PC-9 (cell line): ENCODE measurements at regions of chr6 and their contacts with region 1.

Region 1: GRCh38 chr6:11232193-11232769 is at the start of gene NEDD9:
- DNase-seq: peak; percentile 90 to 96
- H3K4me3 ChIP-seq: peak within 1 kb of the TSS; percentile 81
- H3K27ac ChIP-seq: peak within 1 kb of the TSS; percentile 81
- H3K4me1 ChIP-seq: peaks cover 31% of the 10 kb centered on the region
- H3K27me3 ChIP-seq: no peaks in the 10 kb centered on the region
- CTCF ChIP-seq: no peak
- total RNA-seq, gene NEDD9: 35.8 and 57.5 TPM in 2 replicates

Region 2: GRCh38 chr6:11093589-11094410 is 138.5 kb before region 1 on chr6 and contains the start of gene SMIM13:
- CTCF ChIA-PET with region 1: no interaction called
- POLR2A ChIA-PET with region 1: interaction called, 7 read pairs
- intact Hi-C with region 1: loop called (anchors 5 kb)
- DNase-seq: peak; percentile 88 to 96
- H3K4me3 ChIP-seq: peak within 1 kb of the TSS; percentile 76
- H3K27ac ChIP-seq: peak within 1 kb of the TSS; percentile 64
- H3K4me1 ChIP-seq: 0 out of 2 replicates have a peak, but pooled peaks cover 8% of the 10 kb centered on the region
- H3K27me3 ChIP-seq: no peaks in the 10 kb centered on the region
- CTCF ChIP-seq: peak; percentile 56
- total RNA-seq, gene SMIM13: 16.7 and 22.2 TPM in 2 replicates

Region 3: GRCh38 chr6:11185204-11185954 is 46.9 kb before region 1 on chr6:
- CTCF ChIA-PET with region 1: no interaction called
- POLR2A ChIA-PET with region 1: no interaction called
- intact Hi-C with region 1: no loop called
- DNase-seq: no peak
- H3K4me3 ChIP-seq: no peak overlapping the region
- H3K27ac ChIP-seq: no peak overlapping the region
- H3K4me1 ChIP-seq: no peaks in the 10 kb centered on the region
- H3K27me3 ChIP-seq: no peaks in the 10 kb centered on the region
- CTCF ChIP-seq: no peak

Region 4: DNA sequence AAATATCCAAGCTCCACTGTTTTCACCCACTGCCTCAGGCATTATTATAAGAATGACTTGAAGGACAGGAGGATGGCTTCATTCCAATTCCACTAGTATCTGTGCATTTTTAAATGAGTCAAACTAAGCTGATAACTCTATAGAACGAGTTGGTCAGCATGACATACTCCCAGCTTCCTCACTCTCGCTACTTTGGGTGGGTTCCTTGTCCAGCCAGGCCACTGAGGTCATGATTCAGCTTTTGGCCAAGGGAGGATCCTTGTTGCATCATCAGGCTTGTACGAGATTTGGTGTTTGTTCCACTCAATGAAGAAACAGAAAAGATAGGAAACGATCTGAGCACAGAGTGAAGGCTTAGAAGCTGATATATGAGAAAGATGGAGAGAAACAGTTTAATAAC is 19.7 kb before region 1 on chr6:
- CTCF ChIA-PET with region 1: interaction called, 6 read pairs
- POLR2A ChIA-PET with region 1: interaction called, 44 read pairs
- intact Hi-C with region 1: loop called (anchors 1 kb)
- DNase-seq: peak; percentile 67 to 84
- H3K4me3 ChIP-seq: no peak overlapping the region
- H3K27ac ChIP-seq: peak overlapping the region; percentile 81
- H3K4me1 ChIP-seq: peaks cover 35% of the 10 kb centered on the region
- H3K27me3 ChIP-seq: no peaks in the 10 kb centered on the region
- CTCF ChIP-seq: no peak

Region 5: DNA sequence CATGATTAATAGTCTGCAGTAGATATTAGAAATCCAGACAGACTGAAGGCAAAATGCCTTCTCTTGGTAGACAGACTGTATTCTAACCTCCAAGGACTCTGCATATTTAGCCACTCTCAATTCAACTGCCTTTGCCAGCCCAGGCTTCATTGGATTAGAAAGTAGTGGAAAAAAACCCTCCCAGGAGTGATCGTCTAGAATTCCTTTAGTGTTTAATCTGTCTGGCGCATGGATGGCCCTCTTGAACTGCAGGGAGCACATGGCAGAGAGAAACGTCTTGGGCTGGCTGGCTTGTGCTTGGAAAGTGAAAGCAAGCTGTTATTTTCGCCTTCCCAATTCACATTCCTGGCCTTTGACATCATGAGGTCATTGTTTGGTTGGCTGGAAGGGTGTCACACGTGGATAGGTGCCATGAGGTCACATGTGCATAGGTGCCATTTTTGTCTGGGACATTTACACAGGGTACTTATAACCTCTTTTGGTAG is 31.1 kb after region 1 on chr6:
- CTCF ChIA-PET with region 1: no interaction called
- POLR2A ChIA-PET with region 1: interaction called, 22 read pairs
- intact Hi-C with region 1: no loop called
- DNase-seq: peak; percentile 37 to 42
- H3K4me3 ChIP-seq: no peak overlapping the region
- H3K27ac ChIP-seq: no peak overlapping the region
- H3K4me1 ChIP-seq: peaks cover 18% of the 10 kb centered on the region
- H3K27me3 ChIP-seq: no peaks in the 10 kb centered on the region
- CTCF ChIP-seq: no peak

Region 6: DNA sequence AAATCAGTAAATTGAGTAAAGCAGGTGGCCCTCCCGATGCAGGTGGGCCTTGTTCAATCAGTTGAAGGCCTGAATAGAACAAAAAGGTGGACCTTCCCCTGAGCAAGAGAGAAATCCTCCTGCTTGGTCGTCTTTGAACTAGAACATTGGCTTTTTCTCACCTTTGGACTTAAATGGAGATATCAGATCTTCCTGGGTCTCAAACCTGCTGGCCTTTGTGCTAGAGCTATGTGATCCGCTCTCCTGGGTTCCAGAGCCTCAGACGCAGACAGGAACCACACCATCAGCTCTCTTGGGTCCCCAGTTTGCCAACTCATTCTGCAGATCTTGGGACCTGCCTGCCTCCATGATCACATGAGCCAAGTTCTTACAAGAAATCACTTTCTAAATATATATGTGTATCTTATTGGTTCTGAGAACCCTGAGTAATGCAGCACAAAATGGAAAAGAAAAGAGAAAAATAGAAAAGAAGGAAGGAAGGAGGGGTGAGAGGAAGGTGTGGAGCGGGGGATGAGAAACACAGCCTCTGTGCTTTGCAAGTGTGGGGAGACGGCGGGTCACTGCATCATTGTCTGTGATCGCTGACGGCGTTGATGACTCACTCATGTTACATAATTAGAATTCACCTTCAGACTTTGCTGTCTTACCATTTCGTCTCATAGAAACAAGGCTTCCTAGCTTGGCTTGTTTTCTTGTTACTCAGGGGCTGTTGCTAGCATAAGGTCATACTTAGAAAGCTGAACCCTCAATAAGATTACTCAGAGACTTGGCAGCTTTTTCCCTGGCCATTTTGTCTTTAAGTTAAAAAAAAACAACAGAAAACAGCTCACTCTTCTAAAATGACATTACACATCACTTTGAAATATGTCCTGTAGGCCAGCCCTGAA is 85.8 kb after region 1 on chr6:
- CTCF ChIA-PET with region 1: no interaction called
- POLR2A ChIA-PET with region 1: interaction called, 31 read pairs
- intact Hi-C with region 1: loop called (anchors 1 kb)
- DNase-seq: peak; percentile 84 to 96
- H3K4me3 ChIP-seq: peak overlapping the region; percentile 24; the same call in 1 of the 2 replicates
- H3K27ac ChIP-seq: peak overlapping the region; percentile 85
- H3K4me1 ChIP-seq: peaks cover 34% of the 10 kb centered on the region
- H3K27me3 ChIP-seq: no peaks in the 10 kb centered on the region
- CTCF ChIP-seq: no peak

Region 7: GRCh38 chr6:11392778-11393507 is 160.7 kb after region 1 on chr6:
- CTCF ChIA-PET with region 1: no interaction called
- POLR2A ChIA-PET with region 1: interaction called, 11 read pairs
- intact Hi-C with region 1: loop called (anchors 1 kb)
- DNase-seq: peak; percentile 75 to 77
- H3K4me3 ChIP-seq: no peak overlapping the region; the same call in 1 of the 2 replicates
- H3K27ac ChIP-seq: peak overlapping the region; percentile 89
- H3K4me1 ChIP-seq: peaks cover 63% of the 10 kb centered on the region
- H3K27me3 ChIP-seq: no peaks in the 10 kb centered on the region
- CTCF ChIP-seq: no peak

Region 8: GRCh38 chr6:11496152-11497060 is 264.1 kb after region 1 on chr6:
- CTCF ChIA-PET with region 1: interaction called, 8 read pairs
- POLR2A ChIA-PET with region 1: interaction called, 8 read pairs
- intact Hi-C with region 1: loop called (anchors 1 kb)
- DNase-seq: peak; percentile 63 to 77
- H3K4me3 ChIP-seq: no peak overlapping the region
- H3K27ac ChIP-seq: peak overlapping the region; percentile 49
- H3K4me1 ChIP-seq: peaks cover 12% of the 10 kb centered on the region
- H3K27me3 ChIP-seq: no peaks in the 10 kb centered on the region
- CTCF ChIP-seq: peak; percentile 87